Prostate gland (tissue), 2 donors: ENCODE measurements at regions of chr12 and their contacts with region 1.

Region 1: DNA sequence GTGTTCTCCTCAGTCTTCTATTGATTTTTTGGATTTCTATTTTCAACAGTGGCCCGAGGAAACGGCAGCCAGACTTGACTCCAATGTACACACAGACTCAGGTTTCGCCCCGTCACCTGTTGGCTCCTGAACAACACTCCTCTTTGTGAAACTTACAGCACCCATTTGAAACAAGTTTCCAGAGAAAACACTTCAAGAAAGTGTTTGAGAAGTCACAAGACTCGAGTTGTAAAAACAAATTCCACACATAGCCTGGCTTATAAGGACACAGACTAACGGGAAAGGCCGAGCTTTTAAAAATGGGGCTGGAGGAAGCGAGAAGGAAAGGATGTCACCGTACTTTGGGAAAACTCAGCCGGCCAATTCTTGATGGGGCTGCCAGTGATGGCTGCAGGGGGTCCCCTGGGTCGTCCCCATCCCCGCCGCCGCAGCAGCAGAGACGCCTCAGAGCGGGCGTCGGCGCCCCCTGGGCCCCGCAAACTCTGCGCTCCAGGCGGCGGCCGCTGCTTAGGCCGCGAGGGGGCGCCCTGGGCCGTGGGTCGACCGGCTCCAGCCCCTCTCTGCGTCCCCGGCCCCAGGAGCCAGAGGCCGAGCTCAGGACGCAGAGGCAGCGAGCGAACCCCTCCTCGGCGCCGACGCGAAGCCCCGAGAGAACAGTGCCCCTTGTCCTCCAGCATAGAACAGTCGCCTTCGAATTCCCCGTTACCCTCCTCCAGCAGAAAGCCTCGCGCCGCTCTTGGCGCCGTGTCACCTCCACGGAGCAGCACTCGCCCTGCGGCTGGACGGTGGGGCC is 106.9 kb downstream of the PRICKLE1 start:
- DNase-seq: peak; percentile 77
- H3K4me3 ChIP-seq: peak overlapping the region; percentile 55 to 59
- H3K27ac ChIP-seq: peak overlapping the region; percentile 64 to 76
- H3K4me1 ChIP-seq: no peaks in the 10 kb centered on the region
- H3K27me3 ChIP-seq: no peaks in the 10 kb centered on the region
- CTCF ChIP-seq: peak; percentile 65 to 91 (median 86)
- POLR2A ChIP-seq: no peak

Region 2: DNA sequence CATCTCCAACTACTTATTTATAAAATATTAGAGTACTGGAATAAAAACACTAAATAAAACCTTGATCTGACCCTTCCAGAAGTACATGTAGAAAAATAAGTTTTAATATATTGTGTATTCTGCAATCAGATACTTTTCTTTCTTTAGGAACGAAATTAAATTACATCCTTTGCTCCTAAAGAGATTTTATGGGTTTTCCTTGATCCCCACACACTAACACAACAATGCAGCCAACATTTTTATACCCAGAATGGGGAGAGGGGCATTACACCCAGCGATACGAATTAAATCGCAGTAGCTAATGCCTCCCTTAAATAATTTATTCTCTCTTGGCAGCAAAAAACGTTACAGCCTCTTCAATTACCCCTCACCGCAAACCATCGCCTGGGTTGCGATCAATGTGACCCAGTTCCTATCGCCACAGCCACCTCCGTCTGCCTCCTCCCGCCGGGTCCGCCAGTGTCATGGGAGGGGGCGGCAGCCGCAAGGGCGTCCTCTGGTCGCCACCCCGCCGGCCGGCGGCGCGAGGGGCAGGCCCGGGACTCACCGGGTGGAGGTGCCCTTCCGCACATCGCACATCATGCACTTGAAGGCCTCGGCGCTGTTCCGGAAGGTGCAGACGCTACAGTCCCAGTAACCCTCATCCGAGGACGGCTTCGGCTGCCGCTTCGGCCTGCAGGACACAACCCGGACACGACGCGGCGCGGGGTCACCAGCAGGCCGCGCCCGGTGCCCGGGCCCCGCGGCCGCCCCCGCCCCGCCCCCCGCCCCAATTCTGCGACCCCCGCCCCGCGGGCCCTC is 245.4 kb before region 1 on chr12:
- intact Hi-C with region 1: loop called (anchors 10 kb)
- DNase-seq: peak; percentile 70
- H3K4me3 ChIP-seq: peak overlapping the region; percentile 79 to 84
- H3K27ac ChIP-seq: peak overlapping the region; percentile 86 to 92
- H3K4me1 ChIP-seq: no peaks in the 10 kb centered on the region
- H3K27me3 ChIP-seq: no peaks in the 10 kb centered on the region
- CTCF ChIP-seq: peak in 2 of 4 experiments; percentile 39 to 53
- POLR2A ChIP-seq: peak; percentile 36

Region 3: GRCh38 chr12:42299392-42300308 is 183.0 kb before region 1 on chr12:
- intact Hi-C with region 1: no loop called
- DNase-seq: no peak
- H3K4me3 ChIP-seq: no peak overlapping the region
- H3K27ac ChIP-seq: no peak overlapping the region
- H3K4me1 ChIP-seq: no peaks in the 10 kb centered on the region
- H3K27me3 ChIP-seq: no peaks in the 10 kb centered on the region
- CTCF ChIP-seq: no peak
- POLR2A ChIP-seq: no peak

Region 4: GRCh38 chr12:42407306-42407705 is 75.3 kb before region 1 on chr12:
- intact Hi-C with region 1: no loop called
- DNase-seq: no peak
- H3K4me3 ChIP-seq: no peak overlapping the region
- H3K27ac ChIP-seq: no peak overlapping the region
- H3K4me1 ChIP-seq: no peaks in the 10 kb centered on the region
- H3K27me3 ChIP-seq: no peaks in the 10 kb centered on the region
- CTCF ChIP-seq: no peak
- POLR2A ChIP-seq: no peak

Region 5: GRCh38 chr12:42568952-42569915 is 86.6 kb after region 1 on chr12:
- intact Hi-C with region 1: loop called (anchors 2 kb)
- DNase-seq: no peak
- H3K4me3 ChIP-seq: no peak overlapping the region
- H3K27ac ChIP-seq: no peak overlapping the region
- H3K4me1 ChIP-seq: no peaks in the 10 kb centered on the region
- H3K27me3 ChIP-seq: no peaks in the 10 kb centered on the region
- CTCF ChIP-seq: peak in 3 of 4 experiments; percentile 23 to 55 (median 49)
- POLR2A ChIP-seq: no peak

Region 6: DNA sequence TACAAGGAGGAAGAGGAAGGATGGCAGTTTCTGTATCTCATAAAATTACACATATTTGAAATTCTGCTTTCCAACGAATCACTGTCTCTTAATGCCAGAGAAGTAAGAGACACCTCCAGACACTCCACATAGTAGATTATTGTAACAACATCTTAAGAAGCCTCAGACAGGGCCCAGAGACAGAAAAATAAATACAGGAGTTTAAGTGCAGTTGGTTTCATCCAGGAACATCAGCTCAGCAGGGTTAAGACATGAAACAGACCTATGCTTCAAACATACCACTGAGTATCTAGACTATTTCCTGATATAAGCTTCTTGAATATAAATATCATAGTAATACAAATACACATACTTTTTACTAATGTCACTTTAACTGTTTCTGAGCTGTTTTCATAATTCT is 779.1 kb after region 1 on chr12:
- intact Hi-C with region 1: no loop called
- DNase-seq: no peak
- H3K4me3 ChIP-seq: no peak overlapping the region
- H3K27ac ChIP-seq: no peak overlapping the region
- H3K4me1 ChIP-seq: no peaks in the 10 kb centered on the region
- H3K27me3 ChIP-seq: no peaks in the 10 kb centered on the region
- CTCF ChIP-seq: no peak
- POLR2A ChIP-seq: no peak

Region 7: DNA sequence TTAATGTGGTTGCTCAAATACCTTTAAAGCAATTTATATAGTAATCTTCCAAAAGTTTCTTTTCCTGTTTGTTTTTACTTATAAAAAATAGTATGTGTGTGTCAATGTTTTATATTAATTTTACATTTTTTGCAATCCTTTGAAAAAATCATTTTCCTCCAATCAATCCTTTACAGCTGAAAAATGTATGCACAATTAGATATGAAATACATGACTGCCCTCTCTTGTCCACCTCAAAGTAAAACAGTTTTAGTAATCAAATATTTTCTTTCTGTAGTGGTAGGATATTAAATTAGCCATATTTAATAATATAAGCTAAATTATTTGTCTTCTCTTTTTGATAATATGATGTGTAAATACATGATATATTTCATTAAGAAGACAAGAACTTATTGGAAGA is 799.5 kb after region 1 on chr12:
- intact Hi-C with region 1: loop called (anchors 5 kb)
- DNase-seq: no peak
- H3K4me3 ChIP-seq: no peak overlapping the region
- H3K27ac ChIP-seq: no peak overlapping the region
- H3K4me1 ChIP-seq: no peaks in the 10 kb centered on the region
- H3K27me3 ChIP-seq: no peaks in the 10 kb centered on the region
- CTCF ChIP-seq: peak in 2 of 4 experiments; percentile 41 to 43
- POLR2A ChIP-seq: no peak

Region 8: DNA sequence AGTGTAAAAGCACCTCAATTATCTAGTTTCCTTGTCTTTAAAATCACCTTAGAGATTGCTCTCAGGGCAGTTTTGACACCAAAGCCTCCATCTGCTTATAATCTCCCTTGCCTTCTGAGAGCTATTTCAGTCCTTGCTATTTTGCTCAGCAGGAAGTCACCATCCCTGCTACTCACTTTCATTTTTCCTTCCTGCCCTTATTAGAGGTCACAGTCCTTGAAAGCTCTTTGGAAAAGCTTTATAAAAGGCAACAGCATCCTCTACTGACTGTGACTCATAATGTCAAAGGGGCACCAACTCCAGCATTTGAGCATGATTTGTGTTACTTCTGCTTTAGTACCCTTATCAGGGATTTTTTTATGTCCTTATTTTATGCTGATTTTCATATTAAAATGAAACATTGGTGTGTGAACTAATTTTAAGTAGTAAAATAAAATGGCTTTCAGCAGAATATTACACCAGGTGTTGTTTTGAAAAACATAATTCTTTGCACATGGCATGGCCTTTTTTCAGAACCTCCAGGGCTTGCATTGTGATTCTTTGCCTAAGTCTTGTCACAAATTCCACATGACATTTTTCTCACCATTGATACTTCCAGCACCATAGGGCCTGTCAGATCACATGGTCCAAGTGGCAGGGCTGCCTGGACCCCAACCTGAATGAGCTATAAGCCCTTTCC is 856.3 kb after region 1 on chr12:
- intact Hi-C with region 1: loop called (anchors 2 kb)
- DNase-seq: no peak
- H3K4me3 ChIP-seq: no peak overlapping the region
- H3K27ac ChIP-seq: no peak overlapping the region
- H3K4me1 ChIP-seq: no peaks in the 10 kb centered on the region
- H3K27me3 ChIP-seq: no peaks in the 10 kb centered on the region
- CTCF ChIP-seq: peak in 2 of 4 experiments; percentile 54 to 57
- POLR2A ChIP-seq: no peak